PC-3 (cell line): ENCODE measurements at regions of chr15 and their contacts with region 1.

Region 1: GRCh38 chr15:36883713-36884517 is 216.4 kb downstream of the MEIS2 start:
- DNase-seq: peak; percentile 88
- ATAC-seq: peak; percentile 92
- H3K4me3 ChIP-seq: peak overlapping the region; percentile 70
- H3K27ac ChIP-seq: no peak overlapping the region
- H3K4me1 ChIP-seq: peaks cover 12% of the 10 kb centered on the region
- H3K27me3 ChIP-seq: peaks cover 45% of the 10 kb centered on the region
- CTCF ChIP-seq: peak; percentile 89

Region 2: DNA sequence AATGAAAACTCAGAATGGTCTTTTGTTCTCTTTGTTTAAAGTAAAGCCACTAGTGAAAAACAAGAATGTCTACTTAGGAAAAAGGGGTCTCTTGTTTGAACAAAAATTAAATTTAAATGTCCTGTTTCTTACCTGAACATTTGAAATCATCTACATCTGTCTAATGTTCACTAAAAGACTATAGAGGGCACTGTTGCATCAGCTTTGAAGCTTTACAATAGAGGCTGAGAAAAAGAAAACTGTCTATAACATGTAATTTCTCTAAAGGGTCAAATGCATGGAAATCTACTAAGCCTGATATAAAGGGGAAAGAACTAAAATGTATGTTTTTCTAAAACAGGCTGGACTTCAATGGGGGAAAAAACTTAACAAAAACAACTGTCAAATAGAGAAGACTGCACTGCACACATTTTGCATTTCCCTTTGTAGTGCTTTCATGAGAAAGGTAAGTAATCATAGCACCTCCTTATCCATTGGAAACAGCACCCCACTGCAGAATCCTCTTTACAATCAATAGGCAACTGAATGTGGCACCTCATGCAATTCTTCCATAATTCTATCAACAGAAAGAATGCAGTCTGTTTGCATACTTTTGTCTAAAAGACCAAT is 1364.3 kb before region 1 on chr15:
- CTCF ChIA-PET with region 1: no interaction called
- POLR2A ChIA-PET with region 1: no interaction called
- intact Hi-C with region 1: loop called (anchors 10 kb)
- DNase-seq: peak; percentile 69
- ATAC-seq: peak; percentile 81
- H3K4me3 ChIP-seq: no peak overlapping the region
- H3K27ac ChIP-seq: no peak overlapping the region
- H3K4me1 ChIP-seq: no peaks in the 10 kb centered on the region
- H3K27me3 ChIP-seq: no peaks in the 10 kb centered on the region
- CTCF ChIP-seq: peak; percentile 89

Region 3: DNA sequence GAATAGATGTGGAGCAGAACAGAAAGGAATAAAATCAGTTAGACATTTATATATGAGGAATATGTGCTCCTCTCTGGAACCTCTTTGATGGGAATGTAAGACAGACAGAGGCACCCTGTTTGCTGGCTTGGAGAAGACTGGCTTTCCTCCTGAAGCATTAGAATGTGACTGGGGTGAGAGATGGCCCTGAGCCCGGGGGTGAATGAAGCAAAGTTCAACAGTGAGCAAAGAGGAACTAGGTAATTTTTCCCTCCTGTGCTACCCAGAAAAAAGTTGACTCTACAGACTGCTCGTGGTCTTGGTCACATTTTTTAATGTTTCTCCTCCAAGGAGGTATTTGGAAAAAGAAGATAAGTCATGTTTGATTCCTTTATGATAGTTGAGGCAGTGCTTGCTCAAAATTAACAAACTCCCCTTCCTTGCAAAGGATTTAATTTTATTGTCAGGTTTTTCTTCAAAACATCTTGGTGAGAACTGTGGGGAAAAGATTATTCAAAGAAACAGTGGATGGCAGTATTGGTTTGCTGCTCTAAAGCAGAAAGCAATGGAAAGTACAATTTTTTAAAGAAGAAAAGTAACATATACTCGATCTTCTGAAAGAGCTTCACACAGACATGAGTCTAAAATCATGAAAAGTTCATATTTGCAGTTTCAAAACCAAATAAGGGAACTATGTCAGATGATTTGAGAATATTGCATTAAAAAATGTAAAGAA is 674.9 kb before region 1 on chr15:
- CTCF ChIA-PET with region 1: no interaction called
- POLR2A ChIA-PET with region 1: no interaction called
- intact Hi-C with region 1: loop called (anchors 5 kb)
- DNase-seq: no peak
- ATAC-seq: no peak
- H3K4me3 ChIP-seq: no peak overlapping the region
- H3K27ac ChIP-seq: no peak overlapping the region
- H3K4me1 ChIP-seq: peaks cover 13% of the 10 kb centered on the region
- H3K27me3 ChIP-seq: no peaks in the 10 kb centered on the region
- CTCF ChIP-seq: peak; percentile 46; the same call in 1 of the 2 replicates

Region 4: DNA sequence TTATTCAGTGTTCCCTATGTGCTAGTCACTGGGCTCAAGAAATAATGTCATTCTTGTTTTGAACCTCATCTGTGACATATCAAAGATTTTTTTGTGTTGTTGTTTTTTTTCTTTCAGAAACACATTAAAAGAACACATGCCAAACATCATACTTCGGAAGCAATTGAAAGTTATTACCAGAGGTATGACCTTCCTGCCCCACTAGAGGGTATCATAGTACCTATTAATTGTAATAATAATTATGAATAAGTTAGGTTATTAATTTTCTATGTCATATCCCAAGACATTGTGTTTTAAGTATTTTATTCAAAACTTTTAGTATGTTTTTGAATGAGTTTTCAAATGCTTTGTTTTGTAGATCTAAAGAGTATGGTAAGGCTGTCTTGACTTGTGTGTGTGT is 238.8 kb before region 1 on chr15:
- CTCF ChIA-PET with region 1: no interaction called
- POLR2A ChIA-PET with region 1: no interaction called
- intact Hi-C with region 1: loop called (anchors 5 kb)
- DNase-seq: peak; percentile 36
- ATAC-seq: no peak
- H3K4me3 ChIP-seq: no peak overlapping the region
- H3K27ac ChIP-seq: no peak overlapping the region
- H3K4me1 ChIP-seq: 0 out of 2 replicates have a peak, but pooled peaks cover 6% of the 10 kb centered on the region
- H3K27me3 ChIP-seq: no peaks in the 10 kb centered on the region
- CTCF ChIP-seq: no peak; the same call in none of the 2 replicates

Region 5: DNA sequence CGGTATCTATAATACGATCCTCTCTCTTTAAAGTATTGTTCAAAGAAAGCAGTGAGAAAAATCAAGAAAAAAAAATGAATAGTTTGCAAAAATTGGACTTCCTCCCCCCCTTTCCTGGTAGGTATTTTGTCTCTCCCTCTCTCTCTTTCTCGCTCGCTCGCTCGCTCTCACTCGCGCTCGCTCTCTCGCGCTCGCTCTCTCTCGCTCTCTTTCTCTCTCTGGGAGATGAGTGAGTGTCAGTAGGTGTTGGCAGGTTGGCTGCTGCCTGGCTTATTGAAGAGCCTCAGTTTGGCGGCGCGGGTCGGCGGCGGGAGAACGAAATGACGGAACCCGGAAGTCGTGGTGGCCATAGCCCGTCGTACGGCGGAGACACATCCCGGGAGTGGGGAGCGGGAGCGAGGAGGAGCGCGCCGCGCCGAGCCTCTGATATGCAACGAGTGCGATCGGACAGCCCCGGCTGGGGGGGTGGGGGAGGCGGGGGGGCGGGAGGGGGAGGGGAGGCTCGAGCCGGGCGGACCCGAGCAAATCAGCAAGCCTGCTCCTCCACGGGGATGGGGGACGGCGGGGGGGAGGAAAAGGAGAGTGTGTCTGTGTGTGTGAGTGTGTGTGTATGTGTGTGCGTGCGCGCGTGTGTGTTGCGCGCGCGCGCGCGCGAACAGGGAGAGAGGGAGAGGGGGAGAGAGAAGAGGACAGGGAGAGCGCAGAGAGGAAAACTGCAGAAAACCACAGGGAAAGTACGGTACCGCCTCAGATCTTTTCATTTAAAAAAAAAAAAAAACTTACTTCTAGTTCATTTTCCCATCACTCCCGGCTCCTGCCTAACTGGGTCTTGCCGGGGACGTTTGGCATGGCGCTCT is 216.4 kb after region 1 on chr15 and contains the start of gene MEIS2:
- CTCF ChIA-PET with region 1: interaction called, 12 read pairs
- POLR2A ChIA-PET with region 1: no interaction called
- intact Hi-C with region 1: loop called (anchors 2 kb)
- DNase-seq: peak; percentile 85
- ATAC-seq: peak; percentile 41
- H3K4me3 ChIP-seq: peak within 1 kb of the TSS; percentile 93
- H3K27ac ChIP-seq: peak within 1 kb of the TSS; percentile 87
- H3K4me1 ChIP-seq: peaks cover 24% of the 10 kb centered on the region; the same call in 1 of the 2 replicates
- H3K27me3 ChIP-seq: no peaks in the 10 kb centered on the region
- CTCF ChIP-seq: no peak
- total RNA-seq, gene MEIS2: 10.0 and 17.5 TPM in 2 replicates

Region 6: DNA sequence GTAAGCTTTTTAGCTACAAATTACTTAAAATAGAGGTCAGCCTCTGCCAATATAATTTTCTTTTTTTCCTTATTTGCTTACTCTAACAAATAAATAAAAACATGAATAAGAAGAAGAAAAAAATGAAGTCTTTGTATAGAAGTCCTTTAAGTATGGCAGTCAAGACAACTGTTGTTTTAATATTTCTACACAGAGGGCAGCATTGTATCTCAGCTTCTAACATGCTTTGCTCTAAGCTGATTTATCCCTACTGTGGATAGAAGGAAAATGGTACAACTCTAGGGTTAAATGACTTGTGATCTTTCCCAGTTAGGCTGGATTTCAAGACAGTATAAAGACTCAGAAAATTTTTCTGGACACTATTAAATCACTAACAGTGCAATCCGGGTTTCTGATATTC is 320.8 kb after region 1 on chr15:
- CTCF ChIA-PET with region 1: no interaction called
- POLR2A ChIA-PET with region 1: no interaction called
- intact Hi-C with region 1: no loop called
- DNase-seq: peak; percentile 22
- ATAC-seq: peak; percentile 46; the same call in 1 of the 2 replicates
- H3K4me3 ChIP-seq: no peak overlapping the region
- H3K27ac ChIP-seq: no peak overlapping the region
- H3K4me1 ChIP-seq: no peaks in the 10 kb centered on the region
- H3K27me3 ChIP-seq: peaks cover 25% of the 10 kb centered on the region
- CTCF ChIP-seq: peak; percentile 29; the same call in 1 of the 2 replicates

Region 7: DNA sequence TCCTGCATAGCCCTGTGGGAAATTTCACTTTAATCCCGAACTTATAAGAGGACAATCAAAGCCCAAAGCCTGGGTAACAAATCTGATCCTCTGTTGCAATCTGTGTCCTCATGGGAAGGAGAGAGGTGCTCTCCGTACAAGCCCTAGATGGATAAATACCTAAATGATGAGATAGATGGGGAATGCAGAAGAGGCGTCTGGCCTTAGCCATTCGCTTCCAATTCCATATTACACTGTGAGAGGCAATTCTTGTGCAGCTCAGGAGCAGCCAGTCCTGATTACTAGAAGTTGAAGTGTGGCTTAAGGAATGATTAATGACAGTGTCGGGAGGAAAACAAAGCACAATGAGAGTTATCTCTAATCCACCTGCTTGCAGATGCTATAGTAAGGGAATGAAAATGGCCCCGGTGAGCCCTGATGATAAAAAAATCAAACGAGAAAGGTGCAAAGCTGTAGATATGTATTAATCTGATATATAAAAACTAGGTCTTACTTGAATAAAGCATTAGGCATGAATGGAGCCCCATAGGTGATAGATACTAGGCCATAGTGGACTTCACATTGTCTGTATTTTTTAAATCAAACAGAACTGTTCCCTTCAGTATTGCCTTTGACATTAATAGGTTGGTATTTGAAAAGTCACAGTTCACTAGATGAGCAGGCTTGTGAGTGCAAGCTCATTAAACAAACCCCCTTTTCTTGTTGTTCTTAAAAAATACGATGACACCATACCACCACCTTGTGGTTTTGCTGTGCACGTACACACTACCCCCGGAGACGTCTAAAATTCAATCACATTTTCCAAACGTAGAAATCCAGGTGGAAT is 996.3 kb after region 1 on chr15:
- CTCF ChIA-PET with region 1: no interaction called
- POLR2A ChIA-PET with region 1: no interaction called
- intact Hi-C with region 1: loop called (anchors 5 kb)
- DNase-seq: peak; percentile 59
- ATAC-seq: peak; percentile 32; the same call in 1 of the 2 replicates
- H3K4me3 ChIP-seq: no peak overlapping the region
- H3K27ac ChIP-seq: no peak overlapping the region
- H3K4me1 ChIP-seq: peaks cover 26% of the 10 kb centered on the region
- H3K27me3 ChIP-seq: peaks cover 49% of the 10 kb centered on the region
- CTCF ChIP-seq: peak; percentile 96